ENCODE measurements at regions of chr14 and their contacts with region 1.

Region 1: DNA sequence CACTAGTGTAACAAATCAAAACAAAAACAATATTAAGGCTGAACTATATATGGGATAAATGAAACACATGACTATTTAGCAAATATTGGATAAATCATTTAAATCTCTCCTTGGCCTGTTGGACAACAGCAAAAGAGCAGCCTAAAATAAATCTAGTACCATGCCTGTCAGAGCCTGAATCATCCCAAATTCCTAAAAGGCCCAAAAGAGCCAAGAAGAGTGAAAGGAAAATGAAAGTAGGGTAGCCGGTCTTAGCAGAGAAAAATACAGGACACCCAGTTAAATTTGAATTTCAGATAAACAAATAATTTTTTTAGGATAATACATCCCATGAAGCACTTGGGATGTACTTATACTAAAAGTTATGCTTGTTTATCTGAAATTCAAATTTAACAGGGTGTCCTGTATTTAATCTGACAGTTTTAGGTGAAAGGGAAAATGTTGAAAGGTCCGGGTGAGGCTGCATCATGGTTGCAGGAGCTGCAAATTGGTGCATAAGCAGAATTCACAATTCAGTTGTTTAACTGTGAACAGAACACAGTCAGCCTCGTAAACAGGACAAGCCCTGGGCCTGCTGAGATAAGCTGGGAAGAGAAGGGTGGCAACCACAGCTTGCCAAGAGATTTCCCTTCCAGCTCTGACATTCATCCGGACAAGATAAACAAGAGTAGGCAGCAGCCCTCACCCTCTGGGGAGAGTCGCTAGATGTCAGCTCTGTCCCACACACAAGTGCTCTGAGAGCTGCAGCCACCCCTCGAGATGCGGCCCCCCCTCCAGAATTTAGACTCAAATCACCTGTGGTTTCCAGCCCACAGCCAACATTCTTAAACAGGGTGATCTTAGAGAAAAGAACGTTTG is 30.3 kb downstream of the DMAC2L start:
- DNase-seq: no peak
- ATAC-seq: peak; percentile 86
- H3K4me3 ChIP-seq: no peak overlapping the region
- H3K27ac ChIP-seq: no peak overlapping the region
- H3K4me1 ChIP-seq: peaks cover 9% of the 10 kb centered on the region
- H3K27me3 ChIP-seq: no peaks in the 10 kb centered on the region
- CTCF ChIP-seq: peak; percentile 60 to 84 (median 67)
- EP300 ChIP-seq: no peak
- POLR2A ChIP-seq: no peak
- RAD21 ChIP-seq: peak; percentile 83

Region 2: DNA sequence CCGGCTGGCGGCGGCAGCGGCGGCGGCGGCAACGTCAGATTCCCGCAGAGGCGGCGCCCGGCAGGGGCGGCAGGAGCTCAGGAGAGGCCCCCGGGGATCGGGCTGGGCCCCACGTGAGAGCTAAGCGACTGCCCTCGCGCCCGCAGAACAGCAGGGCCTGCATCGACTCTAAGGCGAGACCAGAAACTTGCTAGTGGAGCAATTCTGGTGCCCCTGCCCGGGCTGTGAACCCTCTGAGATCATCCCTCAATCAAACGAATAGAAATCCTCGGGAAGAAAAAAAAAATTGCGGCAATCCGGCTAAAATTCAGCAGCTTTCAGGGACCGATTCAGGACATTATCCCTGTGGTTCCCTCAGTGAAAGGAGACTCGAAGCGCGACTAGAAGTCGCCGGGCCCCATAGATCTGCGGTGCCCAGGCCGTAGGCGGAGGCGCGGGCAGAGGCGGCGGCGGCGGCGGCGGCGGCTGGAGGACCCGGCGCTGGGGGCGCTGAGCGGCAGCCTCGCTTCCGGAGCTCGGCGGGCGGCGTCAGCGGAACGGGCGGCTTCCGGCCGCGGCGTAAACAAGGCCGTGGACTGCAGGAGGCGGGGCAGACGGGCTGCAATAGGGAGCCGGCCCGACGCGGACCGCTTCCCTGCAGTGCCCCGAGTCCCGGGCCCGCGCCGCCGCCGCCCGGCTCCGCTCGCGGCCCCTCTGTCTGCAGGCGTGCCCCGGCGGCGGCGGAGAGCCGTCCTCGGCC is 574.7 kb before region 1 on chr14 and contains the start of gene KLHDC2:
- CTCF ChIA-PET with region 1: no interaction called
- POLR2A ChIA-PET with region 1: no interaction called
- RAD21 ChIA-PET with region 1: no interaction called
- SMC1A ChIA-PET with region 1: no interaction called
- in situ Hi-C with region 1: no loop called
- intact Hi-C with region 1: no loop called
- DNase-seq: no peak
- ATAC-seq: peak; percentile 94
- H3K4me3 ChIP-seq: peak within 1 kb of the TSS; percentile 93
- H3K27ac ChIP-seq: peak within 1 kb of the TSS; percentile 93
- H3K4me1 ChIP-seq: peaks cover 7% of the 10 kb centered on the region
- H3K27me3 ChIP-seq: no peaks in the 10 kb centered on the region
- CTCF ChIP-seq: peak in 1 of 3 experiments; percentile 54; a peak in 2 of 6 replicates
- EP300 ChIP-seq: no peak
- POLR2A ChIP-seq: peak; percentile 81
- RAD21 ChIP-seq: no peak
- polyA plus RNA-seq, gene KLHDC2: 6.0 to 13.3 TPM

Region 3: DNA sequence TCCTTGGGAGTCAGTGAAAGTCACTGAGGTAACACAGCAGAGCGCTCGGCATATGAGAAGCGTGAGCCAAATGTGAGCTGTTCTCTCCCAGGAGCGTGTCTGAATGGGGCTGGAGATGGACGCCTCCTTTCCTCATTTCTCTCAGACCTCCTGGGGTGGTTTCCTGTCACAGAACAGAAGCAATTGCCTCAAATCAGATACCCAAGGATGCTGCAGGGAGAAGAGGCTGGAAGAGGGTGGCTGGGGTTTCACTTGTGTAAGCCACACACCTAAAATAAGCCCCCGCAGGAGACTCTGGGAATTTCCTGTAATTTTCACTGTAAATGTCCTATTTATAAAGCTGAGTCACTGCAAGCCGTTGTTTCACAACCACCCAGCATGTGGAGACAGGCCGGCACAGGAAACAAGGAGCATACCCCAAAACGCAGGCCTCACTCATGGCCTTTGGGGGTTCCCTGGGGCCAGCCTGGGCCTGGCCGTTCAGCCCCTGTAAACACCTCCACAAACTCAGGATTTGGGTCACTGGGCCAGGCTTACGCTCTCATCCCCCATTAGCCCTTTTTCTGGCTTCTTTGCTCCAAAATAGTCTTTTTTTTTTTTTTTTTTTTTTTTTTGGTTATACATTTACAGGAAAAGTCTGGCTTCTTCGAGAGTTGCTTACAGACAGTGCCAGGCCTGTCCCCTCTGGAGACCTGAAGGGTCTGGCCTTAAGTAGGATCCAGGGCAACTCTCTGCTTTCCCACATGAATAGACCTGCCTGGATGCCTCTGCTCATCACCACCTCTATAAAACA is 281.4 kb before region 1 on chr14:
- CTCF ChIA-PET with region 1: no interaction called
- POLR2A ChIA-PET with region 1: no interaction called
- RAD21 ChIA-PET with region 1: no interaction called
- SMC1A ChIA-PET with region 1: no interaction called
- in situ Hi-C with region 1: no loop called
- intact Hi-C with region 1: no loop called
- DNase-seq: no peak
- ATAC-seq: peak; percentile 51
- H3K4me3 ChIP-seq: 0 out of 2 replicates have a peak overlapping the region, but pooled peaks have one; percentile 25
- H3K27ac ChIP-seq: peak overlapping the region; percentile 98
- H3K4me1 ChIP-seq: peaks cover 53% of the 10 kb centered on the region
- H3K27me3 ChIP-seq: no peaks in the 10 kb centered on the region
- CTCF ChIP-seq: no peak
- EP300 ChIP-seq: peak in 1 of 2 experiments; percentile 66; a peak in 2 of 4 replicates
- POLR2A ChIP-seq: no peak
- RAD21 ChIP-seq: peak; percentile 32; the same call in 1 of the 2 replicates

Region 4: GRCh38 chr14:50363714-50364111 is 21.3 kb after region 1 on chr14:
- CTCF ChIA-PET with region 1: interaction called, 8 read pairs
- POLR2A ChIA-PET with region 1: interaction called, 5 read pairs
- RAD21 ChIA-PET with region 1: interaction called, 9 read pairs
- SMC1A ChIA-PET with region 1: interaction called, 24 read pairs
- in situ Hi-C with region 1: no loop called
- intact Hi-C with region 1: no loop called
- DNase-seq: peak; percentile 81
- ATAC-seq: peak; percentile 97
- H3K4me3 ChIP-seq: peak overlapping the region; percentile 80
- H3K27ac ChIP-seq: peak overlapping the region; percentile 94
- H3K4me1 ChIP-seq: peaks cover 11% of the 10 kb centered on the region
- H3K27me3 ChIP-seq: no peaks in the 10 kb centered on the region
- CTCF ChIP-seq: no peak
- EP300 ChIP-seq: no peak
- POLR2A ChIP-seq: peak; percentile 69
- RAD21 ChIP-seq: no peak

Region 5: GRCh38 chr14:50396631-50397390 is 54.4 kb after region 1 on chr14 and contains the start of gene CDKL1:
- CTCF ChIA-PET with region 1: interaction called, 4 read pairs
- POLR2A ChIA-PET with region 1: interaction called, 5 read pairs
- RAD21 ChIA-PET with region 1: interaction called, 4 read pairs
- SMC1A ChIA-PET with region 1: interaction called, 6 read pairs
- in situ Hi-C with region 1: no loop called
- intact Hi-C with region 1: loop called (anchors 1 kb)
- DNase-seq: no peak
- ATAC-seq: peak; percentile 83
- H3K4me3 ChIP-seq: peak within 1 kb of the TSS; percentile 66
- H3K27ac ChIP-seq: peak within 1 kb of the TSS; percentile 59
- H3K4me1 ChIP-seq: peaks cover 7% of the 10 kb centered on the region
- H3K27me3 ChIP-seq: no peaks in the 10 kb centered on the region
- CTCF ChIP-seq: no peak
- EP300 ChIP-seq: no peak
- POLR2A ChIP-seq: peak; percentile 80
- RAD21 ChIP-seq: no peak
- polyA plus RNA-seq, gene CDKL1: 10.0 to 17.2 TPM

Region 6: GRCh38 chr14:50521912-50522341 is 179.5 kb after region 1 on chr14:
- CTCF ChIA-PET with region 1: interaction called, 6 read pairs
- POLR2A ChIA-PET with region 1: no interaction called
- RAD21 ChIA-PET with region 1: interaction called, 19 read pairs
- SMC1A ChIA-PET with region 1: interaction called, 3 read pairs
- in situ Hi-C with region 1: no loop called
- intact Hi-C with region 1: no loop called
- DNase-seq: no peak
- ATAC-seq: peak; percentile 82
- H3K4me3 ChIP-seq: no peak overlapping the region
- H3K27ac ChIP-seq: peak overlapping the region; percentile 81; the same call in 1 of the 2 replicates
- H3K4me1 ChIP-seq: peaks cover 38% of the 10 kb centered on the region
- H3K27me3 ChIP-seq: no peaks in the 10 kb centered on the region
- CTCF ChIP-seq: no peak
- EP300 ChIP-seq: no peak
- POLR2A ChIP-seq: no peak
- RAD21 ChIP-seq: no peak

Region 7: DNA sequence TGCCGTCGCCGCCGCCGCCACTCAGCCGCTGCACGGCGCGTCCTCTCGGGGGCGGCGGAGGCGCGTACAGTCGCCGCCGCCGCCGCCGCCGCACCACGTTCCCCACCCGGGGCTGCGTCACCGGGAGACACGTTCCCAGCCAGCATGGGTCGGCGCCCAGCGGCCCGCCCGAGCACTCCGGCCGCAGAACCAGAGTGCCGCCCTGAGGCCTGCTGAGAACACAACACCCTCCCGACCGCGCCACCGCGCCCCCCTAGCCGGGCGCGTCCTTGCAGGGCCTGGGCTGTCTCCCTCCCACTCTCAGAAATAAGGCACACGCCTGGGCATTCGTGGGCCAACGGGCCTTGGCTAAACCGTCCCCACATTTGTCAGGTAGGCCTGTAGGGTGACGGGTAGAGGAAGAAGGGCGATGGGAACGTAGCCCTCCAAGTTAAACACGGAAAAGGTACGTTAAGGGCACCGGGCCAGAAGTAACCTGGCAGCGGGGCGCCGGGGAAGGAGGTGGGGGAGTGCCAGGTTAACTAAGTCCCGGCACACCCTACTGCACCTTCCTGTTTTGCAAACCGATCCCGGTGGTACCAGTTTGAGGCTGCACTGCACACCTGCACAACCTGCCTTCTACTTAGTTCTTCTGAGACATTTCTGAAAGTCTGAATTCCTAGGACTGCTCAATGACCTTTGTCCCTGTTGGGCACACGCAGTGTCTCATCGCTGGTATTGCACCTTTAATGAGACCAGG is 190.2 kb after region 1 on chr14 and contains the start of gene MAP4K5:
- CTCF ChIA-PET with region 1: interaction called, 13 read pairs
- POLR2A ChIA-PET with region 1: no interaction called
- RAD21 ChIA-PET with region 1: interaction called, 19 read pairs
- SMC1A ChIA-PET with region 1: interaction called, 13 read pairs
- in situ Hi-C with region 1: no loop called
- intact Hi-C with region 1: loop called (anchors 1 kb)
- DNase-seq: peak; percentile 40
- ATAC-seq: peak; percentile 91
- H3K4me3 ChIP-seq: peak within 1 kb of the TSS; percentile 81
- H3K27ac ChIP-seq: peak within 1 kb of the TSS; percentile 75
- H3K4me1 ChIP-seq: peaks cover 10% of the 10 kb centered on the region
- H3K27me3 ChIP-seq: no peaks in the 10 kb centered on the region
- CTCF ChIP-seq: peak; percentile 89 to 99 (median 92); a peak in 5 of 6 replicates
- EP300 ChIP-seq: 0 out of 4 replicates have a peak, but pooled peaks of 1 of the 2 experiments have one; percentile 16
- POLR2A ChIP-seq: no peak; the same call in 1 of the 2 replicates
- RAD21 ChIP-seq: peak; percentile 96
- polyA plus RNA-seq, gene MAP4K5: 9.1 to 12.0 TPM

Region 8: DNA sequence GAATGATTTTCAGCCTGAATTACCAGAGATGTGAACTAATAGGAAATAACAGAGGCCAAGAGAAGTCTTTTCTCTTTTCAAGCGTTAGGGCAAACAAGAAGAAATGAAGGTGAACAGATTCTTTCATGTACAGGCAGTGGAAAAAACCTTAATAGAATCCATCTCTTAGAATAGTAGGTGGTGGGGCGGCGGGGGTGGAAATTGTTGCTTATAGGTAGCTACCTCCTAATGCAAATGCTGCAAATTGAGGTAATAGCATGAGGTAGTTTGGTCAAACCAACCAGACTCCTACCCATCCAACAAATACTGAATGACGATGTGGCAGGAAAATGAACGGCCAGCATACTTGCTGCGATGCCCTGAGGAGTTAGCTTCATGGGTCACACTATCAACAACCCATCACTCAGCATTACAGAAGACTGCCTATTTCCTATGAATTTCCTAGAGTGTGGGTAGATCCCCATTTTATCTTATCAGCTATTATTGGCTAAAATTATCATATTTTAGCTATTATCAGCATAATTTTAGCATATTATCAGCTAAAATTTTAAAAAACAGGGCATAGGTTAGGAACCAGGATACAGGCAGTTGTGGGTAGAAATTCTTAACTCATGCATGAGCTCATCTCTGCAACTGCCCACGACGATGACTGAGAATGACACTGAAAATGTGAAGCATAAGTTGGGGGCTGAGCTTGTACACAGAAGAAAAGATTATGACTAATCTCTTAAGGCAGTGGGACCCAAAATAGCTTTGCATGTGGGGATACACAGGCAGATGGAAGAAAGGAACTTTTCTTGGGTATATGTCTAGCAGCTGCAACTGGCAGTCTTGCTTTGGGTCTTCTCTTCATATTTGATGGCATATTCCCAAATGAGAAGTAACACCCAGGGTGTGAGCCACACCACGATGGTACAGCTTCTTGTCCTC is 419.8 kb after region 1 on chr14:
- CTCF ChIA-PET with region 1: interaction called, 4 read pairs
- POLR2A ChIA-PET with region 1: no interaction called
- RAD21 ChIA-PET with region 1: interaction called, 4 read pairs
- SMC1A ChIA-PET with region 1: no interaction called
- in situ Hi-C with region 1: no loop called
- intact Hi-C with region 1: loop called (anchors 10 kb)
- DNase-seq: no peak
- ATAC-seq: peak; percentile 88
- H3K4me3 ChIP-seq: no peak overlapping the region
- H3K27ac ChIP-seq: peak overlapping the region; percentile 65
- H3K4me1 ChIP-seq: peaks cover 15% of the 10 kb centered on the region; the same call in 1 of the 2 replicates
- H3K27me3 ChIP-seq: no peaks in the 10 kb centered on the region
- CTCF ChIP-seq: no peak
- EP300 ChIP-seq: peak; percentile 12 to 22; a peak in 1 of 4 replicates
- POLR2A ChIP-seq: no peak
- RAD21 ChIP-seq: no peak